Stomach (tissue), 19 donors: ENCODE measurements at regions of chr3 and their contacts with region 1.

Region 1: DNA sequence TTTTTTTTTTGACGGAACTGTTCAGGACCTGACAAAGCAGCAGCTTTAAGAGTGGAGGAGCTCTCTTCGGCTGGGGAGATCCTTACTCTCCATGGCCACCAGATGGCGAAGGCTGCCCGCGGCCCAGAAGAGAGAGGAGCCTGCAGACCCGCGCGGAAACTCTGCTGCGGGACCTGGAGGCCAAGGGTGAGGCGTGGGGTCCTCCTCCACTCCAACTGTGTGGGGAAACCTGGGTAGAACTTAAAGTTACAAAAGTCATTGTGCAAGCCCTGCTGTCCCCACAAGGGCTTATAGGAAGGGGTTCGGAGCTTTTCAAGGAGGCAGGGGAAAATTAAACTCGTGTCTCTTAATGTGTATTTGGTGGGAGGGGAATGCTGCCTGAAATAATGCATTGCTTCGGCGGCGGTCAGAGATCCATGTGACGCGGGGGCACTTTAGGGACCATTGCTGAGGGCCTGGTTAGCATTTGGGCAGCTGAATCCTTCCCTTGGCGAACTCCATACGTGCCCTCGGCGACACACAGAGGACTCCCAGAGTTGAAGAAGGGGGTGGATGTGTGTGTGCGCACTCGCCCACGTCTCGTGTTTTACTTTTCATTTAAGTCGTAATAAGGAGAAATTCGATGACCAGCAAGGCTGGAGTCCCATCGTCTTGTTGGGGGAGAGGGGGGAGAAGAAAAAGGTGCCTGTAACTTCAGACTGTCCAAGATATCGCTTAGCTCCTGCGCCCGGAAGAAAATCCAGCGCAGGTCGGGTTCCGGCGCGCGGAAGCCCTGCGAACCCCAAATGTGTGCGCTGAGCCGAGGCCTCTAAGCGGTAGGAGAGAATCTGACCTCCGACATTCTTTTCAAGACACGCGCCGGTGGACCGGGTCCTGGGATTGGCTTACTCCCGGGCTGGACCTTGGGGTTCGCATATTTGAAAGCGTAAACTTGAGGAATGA is 9.7 kb downstream of the EOMES start:
- DNase-seq: peak; percentile 76 to 92
- H3K4me3 ChIP-seq: peak overlapping the region; percentile 54 to 68 (median 60)
- H3K27ac ChIP-seq: peak overlapping the region in 3 of 5 donors; percentile 23 to 46 (median 28)
- H3K4me1 ChIP-seq: peaks cover 24 to 40% (median 33%) of the 10 kb centered on the region in 4 donors
- H3K27me3 ChIP-seq: peaks cover 7 to 60% (median 44%) of the 10 kb centered on the region in 3 donors
- CTCF ChIP-seq: peak in 5 of 7 experiments; percentile 57 to 80 (median 67)
- EP300 ChIP-seq: no peak
- POLR2A ChIP-seq: no peak

Region 2: GRCh38 chr3:27805282-27805681 is 92.9 kb after region 1 on chr3:
- intact Hi-C with region 1: no loop called
- DNase-seq: no peak
- H3K4me3 ChIP-seq: no peak overlapping the region
- H3K27ac ChIP-seq: no peak overlapping the region
- H3K4me1 ChIP-seq: no peaks in the 10 kb centered on the region
- H3K27me3 ChIP-seq: no peaks in the 10 kb centered on the region
- CTCF ChIP-seq: no peak
- EP300 ChIP-seq: no peak
- POLR2A ChIP-seq: no peak

Region 3: GRCh38 chr3:28317438-28318022 is 605.1 kb after region 1 on chr3:
- intact Hi-C with region 1: loop called (anchors 10 kb)
- DNase-seq: peak in 1 of 2 donors; percentile 67
- H3K4me3 ChIP-seq: no peak overlapping the region
- H3K27ac ChIP-seq: no peak overlapping the region
- H3K4me1 ChIP-seq: no peaks in the 10 kb centered on the region
- H3K27me3 ChIP-seq: no peaks in the 10 kb centered on the region
- CTCF ChIP-seq: peak in 3 of 7 experiments; percentile 28 to 35 (median 34)
- EP300 ChIP-seq: no peak
- POLR2A ChIP-seq: no peak